ENCODE measurements at regions of chr4 and their contacts with region 1.

Region 1: GRCh38 chr4:96056346-96056934 is 216.5 kb downstream of the PDHA2 start:
- DNase-seq: no peak
- ATAC-seq: no peak
- H3K4me3 ChIP-seq: no peak overlapping the region
- H3K4me3 Mint-ChIP-seq: no peak overlapping the region
- H3K27ac ChIP-seq: no peak overlapping the region
- H3K27ac Mint-ChIP-seq: no peak overlapping the region
- H3K4me1 ChIP-seq: no peaks in the 10 kb centered on the region
- H3K4me1 Mint-ChIP-seq: no peaks in the 10 kb centered on the region
- H3K27me3 ChIP-seq: no peaks in the 10 kb centered on the region
- H3K27me3 Mint-ChIP-seq: no peaks in the 10 kb centered on the region
- CTCF ChIP-seq: no peak

Region 2: GRCh38 chr4:95637043-95637600 is 419.3 kb before region 1 on chr4:
- intact Hi-C with region 1: no loop called
- DNase-seq: no peak
- ATAC-seq: no peak
- H3K4me3 ChIP-seq: no peak overlapping the region
- H3K4me3 Mint-ChIP-seq: no peak overlapping the region
- H3K27ac ChIP-seq: no peak overlapping the region
- H3K27ac Mint-ChIP-seq: no peak overlapping the region
- H3K4me1 ChIP-seq: no peaks in the 10 kb centered on the region
- H3K4me1 Mint-ChIP-seq: peaks cover 5 to 10% of the 10 kb centered on the region in 2 donors
- H3K27me3 ChIP-seq: no peaks in the 10 kb centered on the region
- H3K27me3 Mint-ChIP-seq: no peaks in the 10 kb centered on the region
- CTCF ChIP-seq: no peak

Region 3: GRCh38 chr4:95985051-95985450 is 71.4 kb before region 1 on chr4:
- intact Hi-C with region 1: no loop called
- DNase-seq: no peak
- ATAC-seq: no peak
- H3K4me3 ChIP-seq: no peak overlapping the region
- H3K4me3 Mint-ChIP-seq: no peak overlapping the region
- H3K27ac ChIP-seq: no peak overlapping the region
- H3K27ac Mint-ChIP-seq: no peak overlapping the region
- H3K4me1 ChIP-seq: peaks cover 4% of the 10 kb centered on the region
- H3K4me1 Mint-ChIP-seq: peaks cover 7 to 11% of the 10 kb centered on the region in 2 donors
- H3K27me3 ChIP-seq: no peaks in the 10 kb centered on the region
- H3K27me3 Mint-ChIP-seq: no peaks in the 10 kb centered on the region
- CTCF ChIP-seq: no peak

Region 4: DNA sequence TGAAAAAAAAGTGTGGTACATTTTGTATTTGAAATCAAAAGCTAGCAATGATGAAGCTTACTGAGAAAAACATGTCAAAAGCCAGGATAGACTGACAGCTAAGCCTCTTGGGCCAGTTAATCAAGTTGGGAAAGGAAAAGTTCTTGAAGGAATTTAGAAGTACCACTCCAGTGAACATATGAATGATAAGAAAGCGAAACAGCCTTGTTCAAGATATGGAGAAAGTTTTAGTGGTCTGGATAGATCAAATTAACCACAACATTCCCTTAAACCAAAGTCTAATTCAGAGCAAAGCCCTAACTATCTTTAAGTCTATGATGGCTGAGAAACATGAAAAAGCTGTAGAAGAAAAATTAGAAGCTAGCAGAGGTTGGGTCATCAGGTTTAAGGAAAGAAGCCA is 51.7 kb after region 1 on chr4:
- intact Hi-C with region 1: loop called (anchors 5 kb)
- DNase-seq: no peak
- ATAC-seq: no peak
- H3K4me3 ChIP-seq: no peak overlapping the region
- H3K4me3 Mint-ChIP-seq: no peak overlapping the region
- H3K27ac ChIP-seq: no peak overlapping the region
- H3K27ac Mint-ChIP-seq: no peak overlapping the region
- H3K4me1 ChIP-seq: no peaks in the 10 kb centered on the region
- H3K4me1 Mint-ChIP-seq: no peaks in the 10 kb centered on the region
- H3K27me3 ChIP-seq: no peaks in the 10 kb centered on the region
- H3K27me3 Mint-ChIP-seq: no peaks in the 10 kb centered on the region
- CTCF ChIP-seq: no peak

Measured in natural killer cell (primary cell).